ENCODE measurements at regions of chr10 and their contacts with region 1.

Region 1: GRCh38 chr10:13440185-13441061 is 88.4 kb downstream of the BEND7 start:
- DNase-seq: no peak
- H3K4me3 ChIP-seq: peak overlapping the region; percentile 38; the same call in 1 of the 2 replicates
- H3K27ac ChIP-seq: no peak overlapping the region
- H3K27me3 ChIP-seq: peaks cover 27% of the 10 kb centered on the region
- CTCF ChIP-seq: peak; percentile 82

Region 2: GRCh38 chr10:13348216-13349017 is 92.0 kb before region 1 on chr10 and contains the start of gene SEPHS1:
- CTCF ChIA-PET with region 1: interaction called, 19 read pairs
- POLR2A ChIA-PET with region 1: no interaction called
- DNase-seq: no peak
- H3K4me3 ChIP-seq: peak within 1 kb of the TSS; percentile 75
- H3K27ac ChIP-seq: peak within 1 kb of the TSS; percentile 65
- H3K27me3 ChIP-seq: peaks cover 15% of the 10 kb centered on the region
- CTCF ChIP-seq: no peak; the same call in 1 of the 2 replicates
- polyA plus RNA-seq, gene SEPHS1: 76.2 and 76.9 TPM in 2 replicates

Region 3: GRCh38 chr10:13371897-13372470 is 68.4 kb before region 1 on chr10:
- CTCF ChIA-PET with region 1: interaction called, 63 read pairs
- POLR2A ChIA-PET with region 1: no interaction called
- DNase-seq: peak; percentile 56
- H3K4me3 ChIP-seq: no peak overlapping the region
- H3K27ac ChIP-seq: no peak overlapping the region
- H3K27me3 ChIP-seq: peaks cover 6% of the 10 kb centered on the region
- CTCF ChIP-seq: peak; percentile 97

Region 4: GRCh38 chr10:13453896-13454295 is 13.5 kb after region 1 on chr10:
- CTCF ChIA-PET with region 1: interaction called, 22 read pairs
- POLR2A ChIA-PET with region 1: no interaction called
- DNase-seq: no peak
- H3K4me3 ChIP-seq: no peak overlapping the region
- H3K27ac ChIP-seq: no peak overlapping the region
- H3K27me3 ChIP-seq: no peaks in the 10 kb centered on the region
- CTCF ChIP-seq: no peak

Measured in AG04450 (cell line).